ENCODE measurements at regions of chr12 and their contacts with region 1.

Region 1: GRCh38 chr12:21328578-21328977 is 6.1 kb downstream of the SLCO1A2 start:
- DNase-seq: no peak
- H3K4me3 ChIP-seq: no peak overlapping the region
- H3K27ac ChIP-seq: no peak overlapping the region
- H3K4me1 ChIP-seq: no peaks in the 10 kb centered on the region
- H3K27me3 ChIP-seq: no peaks in the 10 kb centered on the region
- CTCF ChIP-seq: no peak
- EP300 ChIP-seq: no peak
- POLR2A ChIP-seq: no peak

Region 2: GRCh38 chr12:20183563-20183962 is 1145.0 kb before region 1 on chr12:
- in situ Hi-C with region 1: no loop called
- intact Hi-C with region 1: no loop called
- DNase-seq: no peak
- H3K4me3 ChIP-seq: no peak overlapping the region
- H3K27ac ChIP-seq: no peak overlapping the region
- H3K4me1 ChIP-seq: no peaks in the 10 kb centered on the region
- H3K27me3 ChIP-seq: no peaks in the 10 kb centered on the region
- CTCF ChIP-seq: no peak
- EP300 ChIP-seq: no peak
- POLR2A ChIP-seq: no peak

Region 3: GRCh38 chr12:21340403-21340802 is 11.8 kb after region 1 on chr12:
- in situ Hi-C with region 1: no loop called
- intact Hi-C with region 1: loop called (anchors 1 kb)
- DNase-seq: no peak
- H3K4me3 ChIP-seq: no peak overlapping the region
- H3K27ac ChIP-seq: no peak overlapping the region
- H3K4me1 ChIP-seq: no peaks in the 10 kb centered on the region
- H3K27me3 ChIP-seq: no peaks in the 10 kb centered on the region
- CTCF ChIP-seq: no peak
- EP300 ChIP-seq: no peak
- POLR2A ChIP-seq: no peak

Region 4: DNA sequence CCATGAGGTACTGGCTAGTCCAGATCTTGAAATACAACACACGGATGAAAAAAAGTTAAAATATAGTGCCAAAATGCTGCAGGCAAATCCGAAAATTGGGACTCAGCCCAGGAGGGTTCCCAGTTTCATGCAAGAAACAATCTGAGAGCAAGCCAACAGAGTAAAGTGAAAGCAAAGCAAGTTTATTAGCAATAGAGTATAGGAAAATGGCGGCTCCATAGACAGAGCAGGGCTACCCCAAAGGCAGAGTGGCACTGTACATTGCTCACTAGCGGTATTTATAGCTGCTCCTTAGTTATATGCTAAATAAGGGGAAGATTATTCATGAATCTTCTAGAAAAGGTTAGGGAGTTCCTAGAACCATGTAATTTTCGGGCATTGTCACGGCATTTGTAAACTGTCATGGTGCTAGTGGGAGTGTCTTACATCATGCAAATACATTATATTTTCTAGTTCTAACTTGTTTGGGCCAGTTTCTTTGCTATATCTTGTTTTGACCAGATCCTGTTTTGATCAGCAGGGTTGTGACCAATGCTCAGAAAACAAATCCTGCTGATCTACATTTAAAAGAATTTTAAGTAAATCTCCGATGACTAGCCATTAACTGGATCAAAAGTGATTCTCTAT is 143.7 kb after region 1 on chr12:
- in situ Hi-C with region 1: no loop called
- intact Hi-C with region 1: no loop called
- DNase-seq: no peak
- H3K4me3 ChIP-seq: no peak overlapping the region
- H3K27ac ChIP-seq: no peak overlapping the region
- H3K4me1 ChIP-seq: no peaks in the 10 kb centered on the region
- H3K27me3 ChIP-seq: no peaks in the 10 kb centered on the region
- CTCF ChIP-seq: no peak
- EP300 ChIP-seq: no peak
- POLR2A ChIP-seq: no peak